MCF 10A (cell line): ENCODE measurements at regions of chr2 and their contacts with region 1.

Region 1: DNA sequence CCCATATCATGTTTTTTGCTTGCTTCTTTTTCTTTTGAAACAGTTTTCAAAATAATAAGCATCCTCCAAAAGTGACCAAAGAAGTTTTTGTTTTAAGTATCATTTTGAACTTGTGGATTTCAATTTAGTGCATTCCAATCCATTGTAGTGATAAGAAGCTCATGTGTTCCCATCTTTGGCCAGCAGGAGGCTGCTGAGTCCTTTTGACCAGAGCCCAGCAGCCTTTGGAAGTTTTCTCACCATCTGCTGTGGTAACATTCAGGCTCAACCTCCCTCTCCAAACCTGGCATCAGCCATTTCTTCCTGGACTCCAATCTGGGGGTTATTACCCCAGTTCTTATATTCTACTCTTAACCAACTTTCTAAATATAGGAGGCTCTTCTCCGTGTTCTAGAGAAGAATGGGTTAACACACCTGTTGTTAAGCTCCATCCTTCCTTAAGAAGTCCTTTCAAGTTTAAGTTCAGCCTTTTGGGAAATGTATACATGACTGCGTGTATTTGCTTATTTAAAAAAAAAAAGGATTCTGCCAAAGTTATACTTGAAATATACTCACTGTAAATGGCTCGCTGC is 39.0 kb upstream of the MAL start:
- DNase-seq: peak; percentile 64
- H3K4me3 Mint-ChIP-seq: no peak overlapping the region
- H3K27ac Mint-ChIP-seq: no peak overlapping the region
- H3K4me1 Mint-ChIP-seq: no peaks in the 10 kb centered on the region
- H3K27me3 Mint-ChIP-seq: peaks cover 56% of the 10 kb centered on the region
- CTCF ChIP-seq: peak; percentile 68

Region 2: DNA sequence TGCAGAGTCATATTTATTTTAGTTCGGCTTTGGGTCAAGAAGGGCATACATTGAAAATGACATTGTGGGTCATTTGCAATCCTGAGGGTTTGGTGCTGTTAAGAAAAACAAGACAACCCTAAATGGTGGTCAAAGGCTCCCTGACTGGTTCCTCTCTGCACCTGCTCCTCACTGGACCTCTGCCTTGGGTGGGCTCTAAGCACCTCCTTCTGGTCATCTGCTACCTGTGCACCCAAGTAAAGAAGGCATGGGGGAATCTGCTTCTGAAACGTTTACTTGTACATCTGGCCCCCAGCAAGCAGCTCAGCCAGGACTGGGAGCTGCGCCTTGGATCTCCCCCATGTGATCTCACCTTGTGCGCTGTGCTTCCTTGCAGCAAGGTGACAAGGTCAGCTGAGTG is 16.1 kb before region 1 on chr2:
- CTCF ChIA-PET with region 1: interaction called, 10 read pairs
- POLR2A ChIA-PET with region 1: no interaction called
- intact Hi-C with region 1: no loop called
- DNase-seq: no peak
- H3K4me3 Mint-ChIP-seq: no peak overlapping the region
- H3K27ac Mint-ChIP-seq: no peak overlapping the region
- H3K4me1 Mint-ChIP-seq: no peaks in the 10 kb centered on the region
- H3K27me3 Mint-ChIP-seq: peaks cover 98% of the 10 kb centered on the region
- CTCF ChIP-seq: no peak

Region 3: DNA sequence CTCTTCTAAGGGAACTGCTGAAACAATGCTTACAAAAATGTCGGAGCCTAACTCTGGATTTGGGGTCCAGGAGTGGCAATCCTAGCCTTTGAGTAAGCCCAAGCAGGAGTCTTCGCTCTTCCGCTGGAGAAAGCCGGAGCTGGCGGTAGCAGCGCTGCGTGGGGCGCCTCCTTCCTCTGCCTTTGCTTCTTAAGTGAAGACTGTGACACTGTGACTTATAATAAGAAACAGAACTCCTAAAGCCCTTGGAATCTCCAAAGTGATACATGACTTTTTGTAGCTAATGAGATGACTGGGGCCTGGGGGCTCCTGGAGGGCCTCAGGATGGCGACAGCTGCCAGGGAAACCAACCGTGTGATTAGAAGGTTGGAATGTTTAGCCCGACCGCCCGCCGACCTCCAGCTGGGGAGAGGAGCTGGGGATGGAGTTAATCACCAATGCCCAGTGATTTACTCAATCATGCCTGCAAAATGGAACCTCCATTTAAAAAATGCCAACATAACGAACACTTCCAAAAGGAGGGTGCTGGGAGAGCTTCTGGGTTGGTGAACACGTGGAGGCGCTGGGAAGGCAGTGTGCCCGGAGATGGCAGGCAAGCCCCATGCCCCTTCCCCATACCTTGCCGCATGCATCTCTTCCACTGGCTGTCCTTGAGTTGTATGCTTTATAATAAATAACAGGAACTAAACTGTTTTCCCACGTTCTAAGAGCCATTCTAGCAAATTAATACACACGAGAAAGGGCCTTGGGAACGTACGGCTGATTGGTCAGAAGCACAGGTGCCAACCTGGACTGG is 10.0 kb after region 1 on chr2:
- CTCF ChIA-PET with region 1: interaction called, 13 read pairs
- POLR2A ChIA-PET with region 1: no interaction called
- intact Hi-C with region 1: no loop called
- DNase-seq: no peak
- H3K4me3 Mint-ChIP-seq: no peak overlapping the region
- H3K27ac Mint-ChIP-seq: no peak overlapping the region
- H3K4me1 Mint-ChIP-seq: no peaks in the 10 kb centered on the region
- H3K27me3 Mint-ChIP-seq: peaks cover 47% of the 10 kb centered on the region
- CTCF ChIP-seq: no peak